Activated CD8-positive, alpha-beta memory T cell treated with anti-CD3 and anti-CD28 coated beads, Interleukin-2, amount 10 ng/mL, durations not matched to agents 7 days and 5 days (primary cell): ENCODE measurements at regions of chrX and their contacts with region 1.

Region 1: DNA sequence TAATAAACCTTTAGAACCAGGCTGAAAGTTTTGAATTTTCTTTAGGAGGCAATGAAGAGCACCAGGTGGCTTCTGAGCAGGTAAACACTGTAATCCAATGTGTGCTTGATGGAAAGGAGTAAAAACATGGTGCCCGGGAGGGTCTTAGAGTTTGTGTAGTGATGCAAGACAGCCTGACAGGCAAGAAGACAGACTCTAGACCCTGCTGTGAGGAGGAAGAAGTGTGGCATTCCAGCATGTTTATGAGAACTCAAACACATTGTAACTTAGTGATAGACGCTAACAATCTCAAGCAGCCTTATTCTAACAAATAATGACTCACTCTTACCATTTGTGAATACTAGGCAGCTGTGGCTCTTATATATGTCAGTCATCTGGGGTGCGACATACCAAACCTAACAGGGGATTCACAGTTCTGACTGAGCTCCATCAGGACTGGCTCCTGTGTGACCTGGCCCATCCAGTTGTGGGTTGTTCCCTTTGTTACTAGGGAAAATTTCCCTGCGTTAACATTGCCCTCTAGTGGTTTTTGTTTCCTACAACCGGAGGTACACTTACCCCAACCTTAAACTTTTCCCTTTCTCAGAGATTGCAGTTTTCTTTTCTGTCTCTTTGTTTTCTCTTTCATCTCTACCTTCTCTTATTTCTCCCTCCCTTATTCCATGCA is 53.8 kb downstream of the VSIG4 start:
- DNase-seq: peak; percentile 55
- ATAC-seq: peak; percentile 97
- H3K4me3 Mint-ChIP-seq: no peak overlapping the region
- H3K27ac Mint-ChIP-seq: peak overlapping the region; percentile 56
- H3K4me1 Mint-ChIP-seq: peaks cover 23% of the 10 kb centered on the region
- H3K27me3 Mint-ChIP-seq: no peaks in the 10 kb centered on the region

Region 2: GRCh38 chrX:65745992-65746391 is 240.1 kb before region 1 on chrX:
- CTCF ChIA-PET with region 1: interaction called, 10 read pairs
- DNase-seq: no peak
- ATAC-seq: no peak
- H3K4me3 Mint-ChIP-seq: no peak overlapping the region
- H3K27ac Mint-ChIP-seq: peak overlapping the region; percentile 65
- H3K4me1 Mint-ChIP-seq: peaks cover 49% of the 10 kb centered on the region
- H3K27me3 Mint-ChIP-seq: no peaks in the 10 kb centered on the region

Region 3: GRCh38 chrX:65871661-65872311 is 114.3 kb before region 1 on chrX:
- CTCF ChIA-PET with region 1: no interaction called
- DNase-seq: no peak
- ATAC-seq: no peak
- H3K4me3 Mint-ChIP-seq: no peak overlapping the region
- H3K27ac Mint-ChIP-seq: no peak overlapping the region
- H3K4me1 Mint-ChIP-seq: peaks cover 33% of the 10 kb centered on the region
- H3K27me3 Mint-ChIP-seq: no peaks in the 10 kb centered on the region